Activated CD4-positive, alpha-beta memory T cell treated with anti-CD3 and anti-CD28 coated beads for 36 hours (primary cell): ENCODE measurements at regions of chr3 and their contacts with region 1.

Region 1: GRCh38 chr3:185912929-185913901 is 24.6 kb downstream of the TRA2B start:
- DNase-seq: no peak
- H3K4me3 Mint-ChIP-seq: no peak overlapping the region
- H3K27ac Mint-ChIP-seq: peak overlapping the region; percentile 36
- H3K4me1 Mint-ChIP-seq: no peaks in the 10 kb centered on the region
- H3K27me3 Mint-ChIP-seq: no peaks in the 10 kb centered on the region

Region 2: DNA sequence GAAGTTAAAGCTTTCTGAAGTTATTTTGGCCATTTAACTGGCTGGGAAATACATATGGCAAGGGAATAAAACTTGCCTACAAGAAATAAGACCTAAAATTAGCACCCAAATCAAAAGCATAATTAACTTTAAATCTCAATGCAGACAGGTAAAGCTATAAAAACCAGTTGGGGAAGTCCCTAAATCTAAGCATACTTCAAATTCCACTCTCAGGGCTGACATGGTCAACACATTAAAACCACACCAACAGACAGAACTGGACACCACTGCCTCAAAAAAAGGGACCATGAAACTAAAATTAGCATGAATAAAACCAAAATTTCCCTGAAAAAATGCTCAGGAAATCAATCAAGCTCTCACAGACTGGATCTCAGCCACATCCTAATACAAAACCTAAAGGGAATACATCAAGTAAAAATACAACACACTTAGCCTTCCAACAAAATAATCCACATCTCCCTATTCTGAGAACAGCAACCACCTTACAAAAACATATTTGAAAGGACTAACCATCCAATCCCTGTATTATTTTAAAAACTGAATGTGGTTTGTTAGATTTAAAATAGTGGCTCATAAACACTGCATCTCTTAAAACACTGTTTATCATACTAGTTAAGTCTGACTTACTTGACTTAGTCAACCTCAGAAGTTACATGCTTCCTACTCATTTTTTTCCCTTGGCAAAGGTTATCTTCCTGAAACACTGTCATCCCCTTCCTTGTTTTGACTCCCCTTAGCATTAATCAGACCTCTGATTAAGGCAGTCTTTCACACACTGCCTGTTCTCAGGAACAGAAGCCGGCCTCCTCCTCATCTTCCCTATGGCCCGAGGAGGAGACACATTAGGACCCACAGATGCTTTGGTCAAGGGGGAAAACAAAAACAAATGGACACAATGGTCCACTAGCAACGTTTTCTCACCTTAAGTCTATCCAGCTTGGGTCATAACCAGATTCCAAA is 16.3 kb after region 1 on chr3:
- CTCF ChIA-PET with region 1: interaction called, 3 read pairs
- POLR2A ChIA-PET with region 1: interaction called, 7 read pairs
- intact Hi-C with region 1: loop called (anchors 2 kb)
- DNase-seq: no peak
- H3K4me3 Mint-ChIP-seq: peak overlapping the region; percentile 67
- H3K27ac Mint-ChIP-seq: peak overlapping the region; percentile 88
- H3K4me1 Mint-ChIP-seq: peaks cover 93% of the 10 kb centered on the region
- H3K27me3 Mint-ChIP-seq: no peaks in the 10 kb centered on the region

Region 3: DNA sequence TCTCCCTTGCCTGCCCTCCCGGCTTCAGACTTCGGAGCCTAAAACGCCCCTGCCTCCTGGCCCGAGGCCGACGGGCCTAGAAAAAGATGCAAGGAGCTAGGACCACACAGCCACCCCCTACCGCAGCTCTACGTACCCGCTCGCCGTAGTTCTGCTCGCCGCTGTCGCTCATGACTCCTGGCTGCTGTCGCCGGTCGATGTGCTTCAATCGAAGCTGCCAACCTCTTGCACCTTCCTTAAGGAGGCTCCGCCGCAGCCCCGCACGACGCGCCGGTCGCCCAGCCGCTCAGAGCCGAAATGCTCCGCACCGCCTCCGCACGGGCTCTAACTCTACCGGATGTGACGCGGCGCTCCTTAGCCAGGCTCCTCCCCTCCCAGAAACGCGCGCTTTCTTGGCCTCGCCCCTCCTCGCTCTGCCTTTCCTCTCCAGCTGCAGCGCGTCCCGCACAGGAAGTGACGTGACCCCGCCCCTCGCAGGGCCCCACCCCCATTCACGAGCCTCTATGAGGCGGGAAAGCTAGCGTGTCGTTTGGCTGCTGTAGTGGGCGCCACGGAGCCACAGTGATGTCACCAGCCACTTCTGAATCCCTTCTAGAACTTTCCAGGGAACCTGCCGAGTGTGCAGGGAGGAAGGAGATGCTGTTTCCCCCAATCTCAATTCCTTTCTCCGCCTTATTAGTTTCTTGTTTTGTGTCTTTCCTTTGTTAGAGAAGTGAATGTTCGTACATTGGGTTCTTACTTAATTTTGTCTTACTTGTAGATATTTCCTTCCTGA is 24.7 kb after region 1 on chr3 and contains the start of gene TRA2B:
- CTCF ChIA-PET with region 1: no interaction called
- POLR2A ChIA-PET with region 1: interaction called, 20 read pairs
- intact Hi-C with region 1: loop called (anchors 2 kb)
- DNase-seq: peak; percentile 99
- H3K4me3 Mint-ChIP-seq: peak within 1 kb of the TSS; percentile 99
- H3K27ac Mint-ChIP-seq: peak within 1 kb of the TSS; percentile 99
- H3K4me1 Mint-ChIP-seq: peaks cover 21% of the 10 kb centered on the region
- H3K27me3 Mint-ChIP-seq: peaks cover 3% of the 10 kb centered on the region
- total RNA-seq, gene TRA2B: 184 to 187 TPM